GM10248 (cell line): ENCODE measurements at regions of chr3 and their contacts with region 1.

Region 1: GRCh38 chr3:138051946-138052802 is 42.2 kb downstream of the CLDN18 start:
- DNase-seq: peak; percentile 42
- CTCF ChIP-seq: peak; percentile 88

Region 2: DNA sequence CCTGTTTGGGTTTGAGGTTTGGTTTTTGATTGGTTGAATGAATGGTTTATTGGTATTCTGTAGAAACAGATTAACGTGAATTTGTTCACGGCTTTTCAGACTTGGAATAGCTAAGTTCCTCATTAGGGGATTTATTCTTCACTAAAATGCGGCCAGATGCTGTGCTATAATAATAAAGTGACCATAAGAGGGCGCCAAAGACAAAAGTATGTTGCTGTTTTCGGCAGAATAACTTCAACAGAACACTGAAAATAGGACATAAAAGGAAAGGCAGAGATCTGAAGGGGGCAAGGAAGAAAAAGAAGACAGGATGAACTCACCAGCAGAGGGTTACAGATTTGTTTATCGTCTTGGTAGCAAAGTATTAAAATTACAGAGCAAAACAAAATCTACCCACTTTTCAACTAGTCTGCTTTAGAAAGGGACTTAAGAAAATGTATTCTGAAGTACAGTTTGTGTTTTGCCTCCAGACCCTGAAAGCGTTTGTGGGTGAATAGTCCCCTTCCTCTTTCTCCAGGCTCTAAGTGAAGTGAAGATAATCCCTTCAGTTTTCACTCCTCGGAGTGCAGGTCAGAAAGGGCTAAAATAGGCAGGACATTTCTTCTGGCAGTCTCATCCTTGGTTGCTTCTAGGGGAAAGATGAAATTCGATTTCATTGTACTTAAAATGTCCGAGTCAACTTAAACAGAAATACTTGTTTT is 946.7 kb before region 1 on chr3:
- CTCF ChIA-PET with region 1: interaction called, 29 read pairs
- POLR2A ChIA-PET with region 1: no interaction called
- DNase-seq: peak; percentile 47
- CTCF ChIP-seq: peak; percentile 71

Region 3: GRCh38 chr3:137121704-137122314 is 930.4 kb before region 1 on chr3:
- CTCF ChIA-PET with region 1: interaction called, 17 read pairs
- POLR2A ChIA-PET with region 1: no interaction called
- DNase-seq: peak; percentile 55
- CTCF ChIP-seq: peak; percentile 74

Region 4: GRCh38 chr3:137970914-137971831 is 81.0 kb before region 1 on chr3:
- CTCF ChIA-PET with region 1: interaction called, 17 read pairs
- POLR2A ChIA-PET with region 1: no interaction called
- DNase-seq: peak; percentile 57
- CTCF ChIP-seq: peak; percentile 88

Region 5: DNA sequence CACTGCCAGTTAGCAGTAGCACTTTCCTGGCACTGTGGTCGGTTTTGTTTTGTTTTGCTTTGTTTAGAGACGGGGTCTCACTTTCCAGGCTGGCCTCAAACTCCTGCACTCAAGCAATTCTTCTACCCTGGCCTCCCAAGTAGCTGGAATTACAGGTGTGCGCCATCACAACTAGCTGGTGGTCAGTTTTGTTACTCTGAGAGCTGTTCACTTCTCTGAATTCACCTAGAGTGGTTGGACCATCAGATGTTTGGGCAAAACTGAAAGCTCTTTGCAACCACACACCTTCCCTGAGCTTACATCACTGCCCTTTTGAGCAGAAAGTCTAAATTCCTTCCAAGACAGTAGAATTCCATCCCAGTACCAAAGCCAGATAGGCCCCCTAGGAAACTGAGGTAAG is 19.6 kb before region 1 on chr3:
- CTCF ChIA-PET with region 1: interaction called, 44 read pairs
- POLR2A ChIA-PET with region 1: no interaction called
- DNase-seq: no peak
- CTCF ChIP-seq: no peak